ENCODE measurements at regions of chr11 and their contacts with region 1.

Region 1: DNA sequence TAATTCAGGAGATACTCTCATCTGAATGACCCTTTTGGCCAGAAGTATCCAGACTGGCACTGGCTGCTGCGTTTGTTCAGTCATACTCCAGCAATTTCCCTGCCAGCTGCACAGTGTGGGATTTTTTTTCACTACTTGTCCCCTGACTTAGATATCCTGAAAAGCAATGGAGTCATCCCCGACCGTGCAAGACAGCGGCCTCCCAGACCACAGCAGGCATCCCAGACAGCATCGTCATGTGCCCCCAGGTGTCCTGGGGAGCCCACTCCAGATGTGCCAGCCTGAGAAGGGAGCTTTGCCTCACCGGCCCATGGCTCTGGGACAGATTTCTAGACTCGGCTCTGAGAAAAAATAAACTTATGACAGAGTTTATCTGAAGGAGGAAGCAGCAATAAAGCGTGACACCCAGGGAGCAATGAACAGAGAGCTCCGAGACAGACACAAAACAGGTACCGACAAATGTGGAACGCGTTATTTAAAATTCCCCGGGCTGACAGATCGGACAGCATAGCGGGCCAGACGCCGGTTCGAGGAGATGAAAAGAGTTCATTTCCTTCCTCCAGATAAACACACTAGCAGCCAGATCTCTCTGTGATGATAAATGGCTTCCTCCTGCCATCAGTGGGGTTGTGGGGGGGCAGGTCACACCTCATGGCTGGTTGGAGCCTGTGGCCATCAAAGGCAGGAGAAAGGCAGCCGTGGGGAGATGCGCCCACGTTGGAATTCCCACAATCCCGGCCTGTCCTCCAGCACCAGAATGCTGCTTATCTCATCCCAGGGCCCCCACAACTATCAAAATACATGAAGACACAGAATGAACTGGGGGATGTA is 106.4 kb upstream of the FGF3 start:
- DNase-seq: peak; percentile 13
- ATAC-seq: no peak

Region 2: DNA sequence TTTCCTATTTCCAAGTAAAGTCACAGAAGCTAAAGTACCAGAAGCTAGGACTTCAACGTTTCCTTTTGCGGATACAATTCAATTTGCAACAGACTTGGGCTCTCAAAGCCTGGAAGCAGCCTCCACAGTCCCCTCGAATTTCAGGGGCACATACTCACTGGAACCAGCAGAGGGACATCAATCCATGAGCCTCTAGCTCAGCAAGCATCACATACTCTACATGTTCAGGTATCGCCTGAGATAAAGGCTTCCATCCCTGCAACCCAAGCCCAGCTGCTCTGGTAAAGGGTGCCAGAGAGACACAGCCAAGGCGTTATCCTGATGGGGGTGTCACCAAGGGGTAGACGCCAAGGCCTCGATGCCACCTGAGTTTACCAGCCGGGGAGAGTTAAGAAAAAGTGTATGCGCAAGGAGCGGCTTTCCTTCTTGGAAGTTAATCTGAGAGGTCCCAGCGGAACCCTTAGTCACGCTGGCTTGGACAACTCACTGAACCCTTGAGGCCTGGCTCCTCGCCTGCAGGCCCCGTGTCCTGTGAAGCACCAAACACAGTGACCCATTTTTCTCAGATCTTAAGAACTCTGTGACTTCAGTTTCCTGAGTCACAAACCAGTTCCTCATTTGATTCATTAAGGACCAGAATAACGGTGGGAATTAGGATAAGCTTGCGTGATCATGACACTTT is 263.4 kb before region 1 on chr11:
- intact Hi-C with region 1: no loop called
- DNase-seq: peak; percentile 67
- ATAC-seq: peak; percentile 63

Region 3: GRCh38 chr11:70073871-70074371 is 148.3 kb after region 1 on chr11:
- intact Hi-C with region 1: loop called (anchors 10 kb)
- DNase-seq: no peak
- ATAC-seq: no peak